Endothelial cell of umbilical vein (primary cell): ENCODE measurements at regions of chr13 and their contacts with region 1.

Region 1: GRCh38 chr13:29595380-29596063 is at the start of gene SLC7A1:
- DNase-seq: peak; percentile 84
- H3K4me3 ChIP-seq: peak within 1 kb of the TSS; percentile 66 to 93 (median 71)
- H3K27ac ChIP-seq: peak within 1 kb of the TSS; percentile 91
- H3K4me1 ChIP-seq: peaks cover 20% of the 10 kb centered on the region
- H3K27me3 ChIP-seq: no peaks in the 10 kb centered on the region
- CTCF ChIP-seq: peak in 1 of 2 donors; percentile 20
- POLR2A ChIP-seq: no peak
- total RNA-seq, gene SLC7A1: 79.3 and 81.2 TPM in 2 replicates

Region 2: GRCh38 chr13:29537736-29538651 is 57.5 kb before region 1 on chr13:
- CTCF ChIA-PET with region 1: no interaction called
- POLR2A ChIA-PET with region 1: no interaction called
- dilution Hi-C with region 1: no loop called
- intact Hi-C with region 1: loop called (anchors 2 kb)
- DNase-seq: peak; percentile 26
- H3K4me3 ChIP-seq: no peak overlapping the region
- H3K27ac ChIP-seq: peak overlapping the region; percentile 15
- H3K4me1 ChIP-seq: peaks cover 21% of the 10 kb centered on the region
- H3K27me3 ChIP-seq: no peaks in the 10 kb centered on the region
- CTCF ChIP-seq: no peak
- POLR2A ChIP-seq: no peak

Region 3: GRCh38 chr13:29564818-29565217 is 30.7 kb before region 1 on chr13:
- CTCF ChIA-PET with region 1: interaction called, 3 read pairs
- POLR2A ChIA-PET with region 1: no interaction called
- dilution Hi-C with region 1: no loop called
- intact Hi-C with region 1: loop called (anchors 2 kb)
- DNase-seq: peak; percentile 37
- H3K4me3 ChIP-seq: no peak overlapping the region
- H3K27ac ChIP-seq: peak overlapping the region; percentile 73
- H3K4me1 ChIP-seq: peaks cover 44% of the 10 kb centered on the region
- H3K27me3 ChIP-seq: no peaks in the 10 kb centered on the region
- CTCF ChIP-seq: no peak
- POLR2A ChIP-seq: no peak

Region 4: DNA sequence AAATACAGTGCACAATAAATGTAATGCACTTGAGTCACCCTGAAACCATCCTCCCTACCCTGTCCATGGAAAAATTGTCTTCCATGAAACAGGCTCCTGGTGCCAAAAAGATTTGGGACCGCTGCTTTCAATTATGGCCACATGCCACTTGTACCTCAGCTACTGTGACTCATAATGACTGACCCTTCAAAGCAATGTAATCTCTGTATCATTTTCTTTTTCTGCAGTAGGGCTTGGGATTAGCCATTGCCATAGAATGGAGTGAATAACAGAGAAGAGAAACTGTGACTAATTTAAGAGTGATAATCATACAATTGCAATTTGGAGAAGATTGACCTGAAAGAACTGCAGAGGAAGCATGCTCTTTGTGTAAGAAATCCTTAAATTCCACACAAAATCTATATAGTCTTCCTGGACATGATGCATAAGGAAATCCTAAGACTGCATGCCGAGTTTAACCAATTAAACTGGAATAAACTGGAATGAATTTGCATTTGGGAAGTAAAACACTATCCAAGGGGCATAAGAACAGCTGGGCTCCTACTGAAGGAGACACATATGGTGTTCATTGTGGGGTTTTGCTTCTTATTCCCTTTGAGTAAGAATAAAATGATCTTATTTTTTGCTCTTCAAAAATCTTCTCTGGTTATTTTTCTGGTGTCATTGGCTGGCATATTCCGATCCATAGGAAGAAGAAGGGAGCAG is 59.5 kb after region 1 on chr13:
- CTCF ChIA-PET with region 1: no interaction called
- POLR2A ChIA-PET with region 1: no interaction called
- dilution Hi-C with region 1: no loop called
- intact Hi-C with region 1: no loop called
- DNase-seq: no peak
- H3K4me3 ChIP-seq: no peak overlapping the region
- H3K27ac ChIP-seq: no peak overlapping the region
- H3K4me1 ChIP-seq: no peaks in the 10 kb centered on the region
- H3K27me3 ChIP-seq: peaks cover 0 to 2% of the 10 kb centered on the region in 2 experiments
- CTCF ChIP-seq: no peak
- POLR2A ChIP-seq: no peak

Region 5: DNA sequence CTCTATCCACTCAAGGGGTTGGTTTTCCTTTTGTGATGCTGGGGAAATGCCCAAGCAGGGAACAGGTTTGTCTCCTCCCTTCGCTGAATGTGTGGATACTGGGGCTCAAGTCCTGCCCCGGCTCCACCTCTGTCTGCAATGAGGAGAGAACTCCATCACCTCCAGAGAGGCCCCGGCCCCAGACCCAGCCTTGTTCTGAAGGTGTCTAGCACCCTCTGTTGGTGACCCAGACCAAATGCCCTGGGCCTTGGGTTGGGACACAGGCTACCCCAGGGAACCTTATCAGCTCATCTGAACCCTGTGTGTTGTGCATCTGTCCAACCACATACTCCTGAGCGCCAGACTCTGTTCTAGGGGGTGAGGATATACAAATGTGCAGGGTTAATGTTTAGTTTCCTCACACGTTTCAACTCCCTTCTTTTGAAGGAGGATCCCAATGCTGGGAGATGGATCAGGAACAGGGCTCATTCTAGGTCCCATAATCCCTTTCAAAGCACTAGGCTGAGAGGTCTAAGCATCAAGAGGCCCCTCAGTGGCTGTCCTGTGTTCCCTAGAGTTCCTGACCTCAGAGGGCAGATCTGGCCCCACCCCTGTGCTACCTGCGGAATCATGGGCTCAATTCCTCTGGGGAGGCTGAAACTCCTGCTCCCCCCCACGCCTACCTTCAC is 112.5 kb after region 1 on chr13:
- CTCF ChIA-PET with region 1: interaction called, 3 read pairs
- POLR2A ChIA-PET with region 1: no interaction called
- dilution Hi-C with region 1: no loop called
- intact Hi-C with region 1: loop called (anchors 1 kb)
- DNase-seq: peak; percentile 46
- H3K4me3 ChIP-seq: no peak overlapping the region
- H3K27ac ChIP-seq: no peak overlapping the region
- H3K4me1 ChIP-seq: peaks cover 5% of the 10 kb centered on the region
- H3K27me3 ChIP-seq: peaks cover 11 to 14% of the 10 kb centered on the region in 2 experiments
- CTCF ChIP-seq: peak; percentile 80 to 89
- POLR2A ChIP-seq: no peak

Region 6: GRCh38 chr13:29923554-29924481 is 328.3 kb after region 1 on chr13:
- CTCF ChIA-PET with region 1: no interaction called
- POLR2A ChIA-PET with region 1: no interaction called
- dilution Hi-C with region 1: no loop called
- intact Hi-C with region 1: loop called (anchors 10 kb)
- DNase-seq: peak; percentile 93
- H3K4me3 ChIP-seq: no peak overlapping the region
- H3K27ac ChIP-seq: peak overlapping the region; percentile 62
- H3K4me1 ChIP-seq: peaks cover 17% of the 10 kb centered on the region
- H3K27me3 ChIP-seq: no peaks in the 10 kb centered on the region
- CTCF ChIP-seq: peak; percentile 94 to 96
- POLR2A ChIP-seq: no peak